ENCODE measurements at regions of chr16 and their contacts with region 1.

Region 1: GRCh38 chr16:1677802-1678496 is at the start of gene JPT2:
- DNase-seq: peak; percentile 98
- H3K4me3 Mint-ChIP-seq: peak within 1 kb of the TSS; percentile 94
- H3K27ac Mint-ChIP-seq: peak within 1 kb of the TSS; percentile 80
- H3K4me1 Mint-ChIP-seq: peaks cover 26% of the 10 kb centered on the region
- H3K27me3 Mint-ChIP-seq: no peaks in the 10 kb centered on the region
- CTCF ChIP-seq: no peak
- total RNA-seq, gene JPT2: 111 and 131 TPM in 2 replicates

Region 2: DNA sequence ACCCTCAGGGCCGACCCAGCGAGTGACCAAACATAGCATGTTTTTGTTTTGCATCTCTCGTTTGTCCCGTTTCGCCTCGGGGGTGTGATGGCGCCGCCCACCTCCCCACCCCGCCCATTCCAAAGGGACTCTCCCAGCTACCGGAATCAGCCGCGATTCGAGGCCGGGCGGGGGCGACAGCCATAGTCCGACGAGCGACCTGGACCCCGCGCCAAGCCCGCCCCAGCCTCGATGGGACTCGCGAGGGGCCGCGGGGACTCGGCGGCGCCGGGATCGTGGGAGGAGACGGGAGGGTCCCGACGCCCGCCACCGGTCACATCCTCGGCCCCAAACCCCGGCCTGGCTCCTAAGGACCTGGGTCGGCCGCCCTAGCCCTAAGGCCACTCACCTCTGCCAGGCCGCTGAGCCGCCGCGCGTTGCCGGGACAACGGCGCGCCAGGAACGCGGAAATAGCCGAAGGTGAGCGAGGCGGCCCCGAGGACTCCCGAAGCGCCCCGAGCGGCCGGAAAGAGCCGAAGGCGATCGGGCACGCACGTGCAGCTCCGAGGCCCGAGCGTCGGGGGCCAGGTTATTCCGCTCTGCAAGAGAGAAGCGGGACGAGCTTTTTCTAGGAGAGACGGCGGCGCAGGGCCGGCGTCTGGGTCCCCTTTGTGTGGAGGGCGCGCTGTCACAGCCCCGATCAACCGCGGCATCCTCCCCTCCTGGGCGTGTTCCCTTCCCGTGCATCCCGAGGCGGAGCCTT is 67.5 kb before region 1 on chr16:
- CTCF ChIA-PET with region 1: no interaction called
- POLR2A ChIA-PET with region 1: interaction called, 8 read pairs
- intact Hi-C with region 1: loop called (anchors 5 kb)
- DNase-seq: peak; percentile 89
- H3K4me3 Mint-ChIP-seq: peak overlapping the region; percentile 85
- H3K27ac Mint-ChIP-seq: peak overlapping the region; percentile 97
- H3K4me1 Mint-ChIP-seq: peaks cover 11% of the 10 kb centered on the region
- H3K27me3 Mint-ChIP-seq: no peaks in the 10 kb centered on the region
- CTCF ChIP-seq: no peak

Region 3: DNA sequence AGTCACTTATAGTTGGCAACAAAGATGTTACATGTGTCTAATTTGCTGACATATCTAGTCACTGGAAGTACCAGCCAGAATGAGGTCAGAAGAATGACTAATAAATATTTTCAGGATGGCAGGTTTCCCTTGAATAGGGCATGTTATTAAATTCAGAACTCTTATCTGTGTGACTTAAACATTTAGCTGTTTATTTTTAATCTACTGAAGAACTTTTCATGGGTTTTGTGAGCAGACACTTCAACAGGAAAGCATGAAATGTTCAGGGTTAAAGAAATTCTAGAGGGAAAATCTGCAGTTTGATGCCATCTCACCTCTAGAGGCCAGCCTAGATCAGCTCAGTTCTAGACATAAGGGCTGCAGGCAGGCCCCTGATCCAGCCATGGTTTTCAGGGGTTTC is 13.3 kb after region 1 on chr16:
- CTCF ChIA-PET with region 1: interaction called, 15 read pairs
- POLR2A ChIA-PET with region 1: interaction called, 62 read pairs
- intact Hi-C with region 1: loop called (anchors 1 kb)
- DNase-seq: peak; percentile 48
- H3K4me3 Mint-ChIP-seq: peak overlapping the region; percentile 62
- H3K27ac Mint-ChIP-seq: peak overlapping the region; percentile 97
- H3K4me1 Mint-ChIP-seq: peaks cover 51% of the 10 kb centered on the region
- H3K27me3 Mint-ChIP-seq: no peaks in the 10 kb centered on the region
- CTCF ChIP-seq: peak; percentile 33

Region 4: GRCh38 chr16:1696863-1697262 is 18.9 kb after region 1 on chr16:
- CTCF ChIA-PET with region 1: interaction called, 8 read pairs
- POLR2A ChIA-PET with region 1: interaction called, 62 read pairs
- intact Hi-C with region 1: no loop called
- DNase-seq: peak; percentile 74
- H3K4me3 Mint-ChIP-seq: no peak overlapping the region
- H3K27ac Mint-ChIP-seq: no peak overlapping the region
- H3K4me1 Mint-ChIP-seq: peaks cover 17% of the 10 kb centered on the region
- H3K27me3 Mint-ChIP-seq: no peaks in the 10 kb centered on the region
- CTCF ChIP-seq: no peak

Region 5: GRCh38 chr16:1723450-1724147 is 45.6 kb after region 1 on chr16:
- CTCF ChIA-PET with region 1: interaction called, 14 read pairs
- POLR2A ChIA-PET with region 1: interaction called, 3 read pairs
- intact Hi-C with region 1: loop called (anchors 1 kb)
- DNase-seq: peak; percentile 62
- H3K4me3 Mint-ChIP-seq: no peak overlapping the region
- H3K27ac Mint-ChIP-seq: no peak overlapping the region
- H3K4me1 Mint-ChIP-seq: peaks cover 6% of the 10 kb centered on the region
- H3K27me3 Mint-ChIP-seq: no peaks in the 10 kb centered on the region
- CTCF ChIP-seq: peak; percentile 62

Region 6: DNA sequence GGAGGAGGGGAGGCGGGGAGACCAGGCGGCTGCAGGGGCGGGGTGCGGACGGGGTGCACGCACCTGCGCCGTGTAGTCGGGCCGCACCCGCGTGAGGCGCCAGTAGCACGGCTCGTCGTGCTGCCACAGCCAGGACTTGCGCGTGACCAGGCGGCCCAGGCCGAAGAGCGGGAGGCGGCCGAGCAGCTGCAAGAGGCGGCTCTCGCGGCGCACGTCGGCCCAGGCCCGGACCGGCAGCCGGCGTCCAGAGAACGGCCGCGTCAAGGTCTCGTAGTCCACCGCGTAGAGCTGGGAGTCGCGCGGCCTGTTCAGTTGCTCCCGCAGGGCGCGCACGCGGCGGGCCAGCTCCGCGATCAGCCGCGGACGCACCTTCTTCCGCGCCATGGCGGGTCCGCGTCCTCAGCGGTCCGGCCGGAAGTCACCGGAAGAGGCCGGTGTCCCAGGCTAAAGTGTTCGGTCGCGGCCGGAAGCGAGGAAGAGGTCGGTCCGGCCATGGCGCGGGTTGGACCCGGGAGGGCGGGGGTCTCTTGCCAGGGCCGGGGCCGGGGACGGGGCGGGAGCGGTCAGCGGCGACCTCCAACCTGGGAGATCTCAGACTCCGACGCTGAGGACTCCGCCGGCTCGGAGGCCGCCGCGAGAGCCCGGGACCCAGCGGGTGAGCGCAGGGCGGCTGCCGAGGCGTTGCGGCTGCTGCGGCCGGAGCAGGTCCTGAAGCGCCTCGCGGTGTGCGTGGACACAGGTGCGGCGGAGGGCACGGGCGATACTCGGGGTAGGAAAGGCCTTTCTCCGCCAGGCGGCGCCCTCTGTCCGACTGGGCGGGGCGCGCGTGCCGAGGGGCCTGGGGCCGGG is 95.0 kb after region 1 on chr16 and contains the starts of genes EME2 and MRPS34:
- CTCF ChIA-PET with region 1: no interaction called
- POLR2A ChIA-PET with region 1: interaction called, 22 read pairs
- intact Hi-C with region 1: no loop called
- DNase-seq: peak; percentile 84
- H3K4me3 Mint-ChIP-seq: peak within 1 kb of the TSS; percentile 80
- H3K27ac Mint-ChIP-seq: peak within 1 kb of the TSS; percentile 80
- H3K4me1 Mint-ChIP-seq: peaks cover 7% of the 10 kb centered on the region
- H3K27me3 Mint-ChIP-seq: no peaks in the 10 kb centered on the region
- CTCF ChIP-seq: peak; percentile 92
- total RNA-seq, gene EME2: 20.6 TPM in 2 replicates
- total RNA-seq, gene MRPS34: 82.2 and 102 TPM in 2 replicates

Region 7: GRCh38 chr16:1929578-1930337 is 251.8 kb after region 1 on chr16:
- CTCF ChIA-PET with region 1: no interaction called
- POLR2A ChIA-PET with region 1: no interaction called
- intact Hi-C with region 1: no loop called
- DNase-seq: peak; percentile 70
- H3K4me3 Mint-ChIP-seq: peak overlapping the region; percentile 31
- H3K27ac Mint-ChIP-seq: no peak overlapping the region
- H3K4me1 Mint-ChIP-seq: no peaks in the 10 kb centered on the region
- H3K27me3 Mint-ChIP-seq: no peaks in the 10 kb centered on the region
- CTCF ChIP-seq: peak; percentile 98

Measured in MCF 10A (cell line).